Prostate gland (tissue), 2 donors: ENCODE measurements at regions of chr7 and their contacts with region 1.

Region 1: GRCh38 chr7:28096713-28097112 is 83.9 kb downstream of the JAZF1 start:
- DNase-seq: peak; percentile 66
- H3K4me3 ChIP-seq: no peak overlapping the region
- H3K27ac ChIP-seq: no peak overlapping the region
- H3K4me1 ChIP-seq: no peaks in the 10 kb centered on the region
- H3K27me3 ChIP-seq: no peaks in the 10 kb centered on the region
- CTCF ChIP-seq: peak; percentile 56 to 85 (median 80)
- POLR2A ChIP-seq: no peak

Region 2: DNA sequence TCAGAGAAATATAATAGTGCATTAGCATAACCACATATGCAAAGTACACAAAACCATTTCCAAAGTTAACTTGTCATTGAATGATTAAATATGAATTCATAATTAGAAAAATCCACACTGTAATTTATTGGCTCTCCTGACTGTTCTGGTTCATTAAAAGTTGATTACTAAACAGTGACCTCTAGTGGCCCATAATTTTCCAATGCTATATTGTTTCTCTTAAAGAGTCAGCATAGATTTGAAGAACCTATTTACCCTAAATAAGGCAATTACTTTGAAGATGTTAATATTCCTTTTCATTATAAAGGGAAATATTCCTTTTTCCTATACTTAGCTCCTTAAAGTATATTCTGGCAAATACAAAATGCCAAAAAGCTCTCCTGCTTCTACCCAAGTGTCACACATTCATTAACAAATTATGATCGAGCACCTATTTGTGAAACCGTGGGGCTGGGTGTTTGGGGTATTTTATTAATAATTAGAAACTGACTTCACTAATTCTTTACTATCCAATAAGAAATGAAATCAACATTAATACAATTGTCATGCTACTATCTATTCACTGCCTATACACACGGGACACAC is 520.3 kb before region 1 on chr7:
- intact Hi-C with region 1: loop called (anchors 10 kb)
- DNase-seq: peak; percentile 47
- H3K4me3 ChIP-seq: no peak overlapping the region
- H3K27ac ChIP-seq: no peak overlapping the region
- H3K4me1 ChIP-seq: no peaks in the 10 kb centered on the region
- H3K27me3 ChIP-seq: no peaks in the 10 kb centered on the region
- CTCF ChIP-seq: peak; percentile 33 to 77 (median 71)
- POLR2A ChIP-seq: no peak

Region 3: GRCh38 chr7:27739909-27740448 is 356.7 kb before region 1 on chr7 and contains the start of gene TAX1BP1:
- intact Hi-C with region 1: loop called (anchors 10 kb)
- DNase-seq: peak; percentile 96
- H3K4me3 ChIP-seq: peak within 1 kb of the TSS; percentile 98 to 99
- H3K27ac ChIP-seq: peak within 1 kb of the TSS; percentile 99 to 100
- H3K4me1 ChIP-seq: no peaks in the 10 kb centered on the region
- H3K27me3 ChIP-seq: no peaks in the 10 kb centered on the region
- CTCF ChIP-seq: peak in 1 of 4 experiments; percentile 15
- POLR2A ChIP-seq: peak; percentile 100
- total RNA-seq, gene TAX1BP1: 105 to 125 TPM

Region 4: DNA sequence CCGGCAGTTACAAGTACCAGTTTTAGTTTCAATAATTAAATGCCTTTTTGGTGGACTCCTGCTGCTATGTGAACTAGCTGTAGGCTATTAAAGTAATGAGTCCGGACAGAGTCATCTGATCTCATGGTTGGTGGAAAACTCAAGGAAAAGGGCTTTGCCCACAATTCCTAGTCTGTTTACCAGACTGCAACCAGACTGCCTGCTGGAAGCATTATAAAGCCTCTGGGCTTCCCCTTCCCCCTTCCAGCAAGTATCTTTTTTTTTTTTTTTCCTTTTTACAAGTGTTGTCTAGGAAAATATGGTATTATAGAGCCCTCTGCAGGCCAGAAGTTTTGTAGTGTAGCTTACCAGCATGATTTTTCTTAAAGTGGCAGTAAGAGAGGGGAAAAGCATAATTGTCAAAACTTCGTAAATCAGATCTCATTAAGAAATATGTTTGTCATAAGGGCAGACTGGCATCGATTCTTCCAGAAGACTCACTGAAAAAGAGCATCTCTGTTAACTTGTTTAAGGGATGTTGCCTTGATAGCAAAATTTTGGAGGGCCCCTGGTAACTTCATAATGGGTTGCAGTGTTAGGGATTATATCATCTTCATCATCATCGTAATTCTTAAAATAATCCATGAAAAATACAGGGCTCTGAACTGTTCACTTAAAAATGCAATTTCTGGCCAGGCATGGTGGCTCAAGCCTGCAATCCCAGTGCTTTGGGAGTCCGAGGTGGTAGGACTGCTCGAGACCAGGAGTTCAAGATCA is 175.5 kb before region 1 on chr7:
- intact Hi-C with region 1: loop called (anchors 10 kb)
- DNase-seq: peak; percentile 66
- H3K4me3 ChIP-seq: no peak overlapping the region
- H3K27ac ChIP-seq: peak overlapping the region; percentile 14 to 18
- H3K4me1 ChIP-seq: no peaks in the 10 kb centered on the region
- H3K27me3 ChIP-seq: no peaks in the 10 kb centered on the region
- CTCF ChIP-seq: peak; percentile 13 to 80 (median 76)
- POLR2A ChIP-seq: no peak

Region 5: DNA sequence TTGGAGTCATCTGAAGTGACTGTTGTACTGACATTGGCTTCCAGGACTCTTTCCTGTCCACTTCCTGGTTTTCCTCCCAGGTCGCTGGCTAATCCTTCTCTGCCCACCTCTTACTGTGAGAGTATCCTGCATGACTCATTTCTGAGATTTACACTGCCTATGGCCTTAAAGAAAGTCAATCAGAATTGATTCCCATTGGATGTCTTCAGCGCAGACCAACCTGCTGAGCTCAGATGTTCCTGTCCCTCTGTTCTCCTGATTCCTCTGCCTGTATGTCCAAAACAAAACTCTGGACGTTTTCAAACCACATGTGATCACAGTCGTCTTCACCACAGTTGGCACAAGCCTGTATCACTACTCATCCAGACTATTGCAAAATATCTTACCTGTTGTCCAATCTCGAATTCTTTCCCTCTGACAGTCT is 577.7 kb after region 1 on chr7:
- intact Hi-C with region 1: no loop called
- DNase-seq: no peak
- H3K4me3 ChIP-seq: no peak overlapping the region
- H3K27ac ChIP-seq: no peak overlapping the region
- H3K4me1 ChIP-seq: no peaks in the 10 kb centered on the region
- H3K27me3 ChIP-seq: no peaks in the 10 kb centered on the region
- CTCF ChIP-seq: no peak
- POLR2A ChIP-seq: no peak